Heart left ventricle (tissue), 16 donors: ENCODE measurements at regions of chr5 and their contacts with region 1.

Region 1: GRCh38 chr5:68287976-68288706 is 72.6 kb downstream of the PIK3R1 start:
- DNase-seq: peak; percentile 77 to 88 (median 80)
- ATAC-seq: peak; percentile 78 to 89 (median 86)
- H3K4me3 ChIP-seq: peak overlapping the region; percentile 32 to 73 (median 60)
- H3K27ac ChIP-seq: peak overlapping the region; percentile 81 to 95 (median 92)
- H3K4me1 ChIP-seq: peaks cover 8 to 84% (median 56%) of the 10 kb centered on the region in 12 donors
- H3K27me3 ChIP-seq: no peaks in the 10 kb centered on the region
- CTCF ChIP-seq: peak in 1 of 12 donors; percentile 4
- POLR2A ChIP-seq: no peak

Region 2: DNA sequence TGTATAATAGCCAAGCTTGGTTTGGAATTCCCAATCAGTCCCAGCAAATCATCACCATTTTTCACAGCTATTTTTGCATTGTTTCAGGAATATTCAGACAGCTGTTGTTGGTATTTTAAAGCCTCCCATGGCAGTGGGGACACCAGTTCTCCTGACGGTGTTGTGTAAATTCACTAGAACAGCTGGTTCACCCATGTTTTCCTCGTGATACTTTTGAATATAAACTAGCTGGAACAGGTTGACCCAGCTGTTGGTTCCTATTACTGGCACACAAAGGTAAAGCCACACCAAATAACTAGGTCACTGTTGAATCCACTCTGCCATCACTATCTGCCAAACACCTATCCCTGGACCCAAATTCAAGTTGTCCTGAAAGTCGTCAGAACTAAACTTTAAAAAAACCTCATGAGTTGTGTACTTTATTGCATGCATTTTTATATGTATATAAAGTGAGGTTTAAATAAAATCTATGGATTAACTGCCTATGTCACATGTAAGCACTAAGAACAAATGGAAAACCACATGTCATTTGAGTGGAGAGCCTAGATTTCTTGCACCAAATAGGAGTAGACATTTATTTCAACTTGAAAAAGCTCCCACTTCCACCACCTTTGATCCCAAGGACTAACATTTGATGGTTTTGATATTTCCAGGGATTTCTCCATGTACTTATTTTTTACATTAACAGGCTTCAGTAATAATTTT is 194.5 kb before region 1 on chr5:
- intact Hi-C with region 1: no loop called
- DNase-seq: no peak
- ATAC-seq: no peak
- H3K4me3 ChIP-seq: no peak overlapping the region
- H3K27ac ChIP-seq: no peak overlapping the region
- H3K4me1 ChIP-seq: peaks cover 0 to 4% (median under 1%) of the 10 kb centered on the region in 12 donors
- H3K27me3 ChIP-seq: no peaks in the 10 kb centered on the region
- CTCF ChIP-seq: no peak
- POLR2A ChIP-seq: no peak

Region 3: GRCh38 chr5:68343421-68343826 is 55.3 kb after region 1 on chr5:
- intact Hi-C with region 1: loop called in 1 of 10 experiments (anchors 5 kb)
- DNase-seq: peak in 4 of 5 donors; percentile 36 to 87 (median 46)
- ATAC-seq: peak; percentile 93 to 97 (median 96)
- H3K4me3 ChIP-seq: no peak overlapping the region
- H3K27ac ChIP-seq: peak overlapping the region; percentile 31 to 70 (median 58)
- H3K4me1 ChIP-seq: peaks cover 0 to 33% (median 5%) of the 10 kb centered on the region in 12 donors
- H3K27me3 ChIP-seq: no peaks in the 10 kb centered on the region
- CTCF ChIP-seq: no peak
- POLR2A ChIP-seq: no peak

Region 4: GRCh38 chr5:68433923-68434879 is 146.1 kb after region 1 on chr5:
- intact Hi-C with region 1: no loop called
- DNase-seq: peak; percentile 82 to 96 (median 88)
- ATAC-seq: peak; percentile 86 to 99 (median 98)
- H3K4me3 ChIP-seq: peak overlapping the region in 7 of 12 donors; percentile 6 to 23 (median 20)
- H3K27ac ChIP-seq: peak overlapping the region; percentile 10 to 92 (median 68)
- H3K4me1 ChIP-seq: peaks cover 0 to 48% (median 16%) of the 10 kb centered on the region in 12 donors
- H3K27me3 ChIP-seq: no peaks in the 10 kb centered on the region
- CTCF ChIP-seq: no peak
- POLR2A ChIP-seq: no peak

Region 5: DNA sequence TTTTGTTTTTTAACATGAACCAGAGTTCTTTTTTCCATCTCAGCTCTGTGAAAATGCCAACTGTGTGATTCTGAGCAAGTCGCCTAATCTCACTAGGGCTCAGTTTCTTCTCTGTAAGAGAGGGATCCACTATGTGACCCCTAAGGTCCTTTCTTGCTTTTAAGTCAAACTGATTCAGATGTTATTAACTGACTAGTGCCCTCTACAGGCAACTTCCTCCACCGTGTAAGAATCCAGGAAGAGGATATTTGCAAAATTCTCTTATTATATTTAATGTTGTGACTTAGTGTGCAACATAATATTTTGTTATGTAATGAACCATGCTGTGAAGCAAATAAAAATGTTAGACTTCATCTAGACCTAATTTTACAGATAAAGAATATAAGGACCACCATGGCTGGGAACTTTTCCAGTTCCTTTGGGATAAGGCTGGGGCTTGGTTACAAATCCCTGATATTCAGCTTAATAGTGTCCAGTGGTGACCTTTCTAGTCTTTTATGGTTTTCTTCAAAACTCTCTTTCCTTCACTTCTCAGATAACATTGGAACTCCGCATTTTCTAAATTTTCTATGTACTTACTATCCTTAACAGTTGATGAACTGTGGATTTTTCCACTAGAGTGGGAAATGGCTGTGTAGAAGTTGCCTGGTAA is 172.1 kb after region 1 on chr5:
- intact Hi-C with region 1: loop called (anchors 1 to 2 kb)
- DNase-seq: peak in 2 of 5 donors; percentile 23 to 46
- ATAC-seq: peak in 3 of 4 donors; percentile 29 to 53 (median 49)
- H3K4me3 ChIP-seq: no peak overlapping the region
- H3K27ac ChIP-seq: no peak overlapping the region
- H3K4me1 ChIP-seq: peaks cover 0 to 19% (median 7%) of the 10 kb centered on the region in 12 donors
- H3K27me3 ChIP-seq: no peaks in the 10 kb centered on the region
- CTCF ChIP-seq: peak; percentile 56 to 85 (median 77)
- POLR2A ChIP-seq: no peak

Region 6: GRCh38 chr5:68534131-68534940 is 246.2 kb after region 1 on chr5:
- intact Hi-C with region 1: loop called in 1 of 10 experiments (anchors 10 kb)
- DNase-seq: no peak
- ATAC-seq: peak; percentile 45 to 74 (median 70)
- H3K4me3 ChIP-seq: peak overlapping the region in 8 of 12 donors; percentile 1 to 35 (median 15)
- H3K27ac ChIP-seq: peak overlapping the region in 9 of 12 donors; percentile 19 to 60 (median 44)
- H3K4me1 ChIP-seq: peaks cover 0 to 30% (median 15%) of the 10 kb centered on the region in 12 donors
- H3K27me3 ChIP-seq: no peaks in the 10 kb centered on the region
- CTCF ChIP-seq: no peak
- POLR2A ChIP-seq: no peak

Region 7: DNA sequence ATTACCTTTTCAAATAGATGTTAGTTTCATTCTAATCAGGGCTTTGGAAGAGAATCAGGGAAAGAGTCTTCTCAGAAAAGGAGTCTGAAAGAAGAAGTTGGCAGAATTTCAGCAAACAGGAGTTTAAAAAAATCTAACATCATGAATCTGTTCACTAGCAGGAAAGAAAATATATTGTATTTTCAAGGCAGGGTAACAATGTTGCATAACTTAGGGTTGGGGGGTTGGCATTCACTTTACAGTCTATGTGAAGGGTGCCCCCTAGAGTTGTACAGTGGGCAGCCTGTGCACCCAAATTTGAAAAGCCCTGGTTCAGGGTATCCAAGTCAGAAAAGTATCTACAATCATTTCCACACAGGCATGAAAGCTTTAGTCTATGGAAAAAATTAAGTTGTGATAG is 457.3 kb after region 1 on chr5:
- intact Hi-C with region 1: loop called in 1 of 10 experiments (anchors 10 kb)
- DNase-seq: no peak
- ATAC-seq: no peak
- H3K4me3 ChIP-seq: no peak overlapping the region
- H3K27ac ChIP-seq: no peak overlapping the region
- H3K4me1 ChIP-seq: no peaks in the 10 kb centered on the region
- H3K27me3 ChIP-seq: no peaks in the 10 kb centered on the region
- CTCF ChIP-seq: peak in 5 of 12 donors; percentile 8 to 30 (median 13)
- POLR2A ChIP-seq: no peak

Region 8: GRCh38 chr5:69007726-69008368 is 719.7 kb after region 1 on chr5:
- intact Hi-C with region 1: loop called in 2 of 10 experiments (anchors 5 kb)
- DNase-seq: peak; percentile 36 to 69 (median 51)
- ATAC-seq: peak; percentile 48 to 82 (median 76)
- H3K4me3 ChIP-seq: no peak overlapping the region
- H3K27ac ChIP-seq: no peak overlapping the region
- H3K4me1 ChIP-seq: no peaks in the 10 kb centered on the region
- H3K27me3 ChIP-seq: no peaks in the 10 kb centered on the region
- CTCF ChIP-seq: peak; percentile 63 to 86 (median 74)
- POLR2A ChIP-seq: no peak